AG04449 (cell line): ENCODE measurements at regions of chr12 and their contacts with region 1.

Region 1: GRCh38 chr12:119115296-119115905 is 63.3 kb upstream of the HSPB8 start:
- DNase-seq: no peak
- H3K4me3 ChIP-seq: no peak overlapping the region
- CTCF ChIP-seq: peak; percentile 73

Region 2: GRCh38 chr12:119130523-119130922 is 15.1 kb after region 1 on chr12:
- CTCF ChIA-PET with region 1: interaction called, 10 read pairs
- POLR2A ChIA-PET with region 1: no interaction called
- DNase-seq: no peak
- H3K4me3 ChIP-seq: no peak overlapping the region
- CTCF ChIP-seq: no peak